ENCODE measurements at regions of chr2 and their contacts with region 1.

Region 1: GRCh38 chr2:38170098-38170497 is 94.1 kb upstream of the CYP1B1 start:
- DNase-seq: no peak
- H3K4me3 ChIP-seq: no peak overlapping the region
- H3K27ac ChIP-seq: no peak overlapping the region
- H3K4me1 ChIP-seq: no peaks in the 10 kb centered on the region
- H3K27me3 ChIP-seq: peaks cover 0 to 5% of the 10 kb centered on the region in 2 experiments
- CTCF ChIP-seq: no peak
- POLR2A ChIP-seq: no peak

Region 2: GRCh38 chr2:38155015-38155414 is 15.1 kb before region 1 on chr2:
- CTCF ChIA-PET with region 1: no interaction called
- POLR2A ChIA-PET with region 1: no interaction called
- dilution Hi-C with region 1: no loop called
- intact Hi-C with region 1: loop called (anchors 1 kb)
- DNase-seq: no peak
- H3K4me3 ChIP-seq: no peak overlapping the region
- H3K27ac ChIP-seq: no peak overlapping the region
- H3K4me1 ChIP-seq: no peaks in the 10 kb centered on the region
- H3K27me3 ChIP-seq: peaks cover 11 to 27% of the 10 kb centered on the region in 2 experiments
- CTCF ChIP-seq: no peak
- POLR2A ChIP-seq: no peak

Region 3: GRCh38 chr2:38344813-38345212 is 174.7 kb after region 1 on chr2:
- CTCF ChIA-PET with region 1: no interaction called
- POLR2A ChIA-PET with region 1: no interaction called
- dilution Hi-C with region 1: no loop called
- intact Hi-C with region 1: no loop called
- DNase-seq: no peak
- H3K4me3 ChIP-seq: no peak overlapping the region
- H3K27ac ChIP-seq: no peak overlapping the region
- H3K4me1 ChIP-seq: no peaks in the 10 kb centered on the region
- H3K27me3 ChIP-seq: no peaks in the 10 kb centered on the region
- CTCF ChIP-seq: no peak
- POLR2A ChIP-seq: no peak

Measured in endothelial cell of umbilical vein (primary cell).